MCF 10A (cell line): ENCODE measurements at regions of chr12 and their contacts with region 1.

Region 1: DNA sequence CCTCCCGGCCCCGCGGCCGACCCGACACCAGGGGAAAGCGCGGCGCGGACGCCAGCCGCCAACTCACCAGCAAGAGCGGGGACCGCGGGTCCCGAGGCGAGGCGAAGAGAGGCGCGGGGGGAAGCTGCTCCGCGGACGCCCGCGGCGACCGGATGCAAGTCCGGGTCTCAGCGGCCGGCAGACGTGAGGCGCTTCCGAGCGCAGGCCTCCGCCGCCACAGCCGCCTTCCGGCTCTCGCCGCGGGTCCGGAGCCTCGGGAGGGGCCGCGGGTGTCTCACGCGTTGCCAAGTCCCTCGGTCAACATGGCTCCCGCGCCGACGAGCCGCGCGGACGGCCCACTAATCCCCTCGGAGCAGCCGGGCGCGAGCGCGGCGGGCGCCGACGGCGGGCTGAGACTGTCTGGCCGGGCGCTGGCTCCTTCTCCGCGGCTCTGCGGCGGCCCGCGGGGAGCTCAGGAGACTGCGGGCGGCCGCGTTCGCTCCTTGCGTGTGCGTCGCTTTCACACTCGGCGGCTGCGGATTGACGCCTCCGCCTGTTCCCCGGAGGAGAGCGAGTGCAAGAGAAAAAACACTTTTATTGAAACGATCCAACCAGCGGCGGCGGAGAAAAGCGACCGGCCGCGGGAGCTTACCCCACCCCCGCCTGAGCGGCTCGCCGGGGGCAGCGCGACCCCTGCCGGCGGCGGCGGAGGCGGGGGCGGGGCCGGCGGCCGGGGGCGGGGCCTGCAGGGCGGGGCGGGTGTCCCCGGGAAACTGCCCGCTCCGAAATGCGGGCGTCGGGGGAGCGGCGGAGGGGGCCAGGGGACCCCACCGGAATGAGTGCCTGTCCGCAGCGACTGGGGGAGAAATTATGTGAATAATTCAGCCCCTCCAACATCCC is at the start of gene CDK17:
- DNase-seq: peak; percentile 82
- H3K4me3 Mint-ChIP-seq: peak within 1 kb of the TSS; percentile 98
- H3K27ac Mint-ChIP-seq: peak within 1 kb of the TSS; percentile 98
- H3K4me1 Mint-ChIP-seq: peaks cover 32% of the 10 kb centered on the region
- H3K27me3 Mint-ChIP-seq: no peaks in the 10 kb centered on the region
- CTCF ChIP-seq: peak; percentile 40
- total RNA-seq, gene CDK17: 49.8 and 50.9 TPM in 2 replicates

Region 2: DNA sequence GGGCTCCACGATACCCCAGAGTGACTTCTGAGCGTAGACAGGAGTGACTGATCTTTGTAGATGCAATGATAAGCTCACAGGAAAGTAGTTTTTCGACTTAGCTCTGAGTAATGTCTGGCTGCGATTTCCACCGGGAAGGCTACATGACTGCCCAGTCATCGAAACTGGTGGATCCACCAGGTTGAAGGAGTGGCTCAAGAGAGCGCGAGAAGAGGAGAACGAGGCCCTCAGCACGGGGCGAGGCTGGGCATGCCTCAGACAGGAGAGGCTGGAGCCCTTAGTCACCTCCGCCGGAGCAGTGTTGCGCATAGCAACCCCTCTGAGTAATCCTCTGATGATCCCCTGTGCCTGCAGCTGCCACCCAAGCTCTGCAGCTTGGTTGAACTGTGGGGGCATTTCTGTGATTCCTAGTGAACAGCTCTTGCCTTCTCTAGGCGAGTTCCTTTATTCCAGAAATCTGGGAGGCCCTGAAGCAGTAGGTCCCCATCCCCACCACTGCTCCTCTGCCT is 180.4 kb before region 1 on chr12:
- CTCF ChIA-PET with region 1: interaction called, 25 read pairs
- POLR2A ChIA-PET with region 1: interaction called, 171 read pairs
- intact Hi-C with region 1: loop called (anchors 2 kb)
- DNase-seq: peak; percentile 99
- H3K4me3 Mint-ChIP-seq: peak overlapping the region; percentile 76
- H3K27ac Mint-ChIP-seq: peak overlapping the region; percentile 100
- H3K4me1 Mint-ChIP-seq: peaks cover 51% of the 10 kb centered on the region
- H3K27me3 Mint-ChIP-seq: no peaks in the 10 kb centered on the region
- CTCF ChIP-seq: no peak

Region 3: GRCh38 chr12:96294831-96295230 is 105.3 kb before region 1 on chr12:
- CTCF ChIA-PET with region 1: interaction called, 6 read pairs
- POLR2A ChIA-PET with region 1: interaction called, 5 read pairs
- intact Hi-C with region 1: loop called (anchors 10 kb)
- DNase-seq: peak; percentile 41
- H3K4me3 Mint-ChIP-seq: no peak overlapping the region
- H3K27ac Mint-ChIP-seq: no peak overlapping the region
- H3K4me1 Mint-ChIP-seq: peaks cover 11% of the 10 kb centered on the region
- H3K27me3 Mint-ChIP-seq: no peaks in the 10 kb centered on the region
- CTCF ChIP-seq: no peak

Region 4: DNA sequence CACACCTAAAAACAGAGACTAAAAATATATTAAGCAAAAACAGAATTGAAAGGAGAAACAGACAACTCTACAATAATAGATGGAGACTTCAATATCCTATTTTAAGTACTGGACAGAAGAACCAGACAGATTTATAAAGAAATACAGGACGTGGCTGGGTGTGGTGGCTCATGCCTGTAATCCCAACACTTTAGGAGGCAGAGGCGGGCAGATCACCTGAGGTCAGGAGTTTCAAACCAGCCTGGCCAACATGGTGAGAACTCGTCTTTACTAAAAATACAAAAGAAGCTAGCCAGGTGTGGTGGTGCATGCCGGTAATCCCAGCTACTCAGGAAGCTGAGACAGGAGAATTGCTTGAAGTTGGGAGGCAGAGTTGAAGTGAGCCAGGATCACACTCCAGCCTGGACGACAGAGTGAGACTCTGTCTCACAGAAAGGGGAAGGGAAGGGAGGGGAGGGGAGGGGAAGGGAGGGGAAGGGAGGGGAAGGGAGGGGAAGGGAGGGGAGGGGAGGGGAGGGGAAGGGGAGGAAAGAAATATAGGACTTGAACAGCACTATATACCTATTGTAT is 52.9 kb before region 1 on chr12:
- CTCF ChIA-PET with region 1: interaction called, 6 read pairs
- POLR2A ChIA-PET with region 1: interaction called, 15 read pairs
- intact Hi-C with region 1: no loop called
- DNase-seq: no peak
- H3K4me3 Mint-ChIP-seq: peak overlapping the region; percentile 48
- H3K27ac Mint-ChIP-seq: peak overlapping the region; percentile 57
- H3K4me1 Mint-ChIP-seq: peaks cover 24% of the 10 kb centered on the region
- H3K27me3 Mint-ChIP-seq: no peaks in the 10 kb centered on the region
- CTCF ChIP-seq: no peak

Region 5: DNA sequence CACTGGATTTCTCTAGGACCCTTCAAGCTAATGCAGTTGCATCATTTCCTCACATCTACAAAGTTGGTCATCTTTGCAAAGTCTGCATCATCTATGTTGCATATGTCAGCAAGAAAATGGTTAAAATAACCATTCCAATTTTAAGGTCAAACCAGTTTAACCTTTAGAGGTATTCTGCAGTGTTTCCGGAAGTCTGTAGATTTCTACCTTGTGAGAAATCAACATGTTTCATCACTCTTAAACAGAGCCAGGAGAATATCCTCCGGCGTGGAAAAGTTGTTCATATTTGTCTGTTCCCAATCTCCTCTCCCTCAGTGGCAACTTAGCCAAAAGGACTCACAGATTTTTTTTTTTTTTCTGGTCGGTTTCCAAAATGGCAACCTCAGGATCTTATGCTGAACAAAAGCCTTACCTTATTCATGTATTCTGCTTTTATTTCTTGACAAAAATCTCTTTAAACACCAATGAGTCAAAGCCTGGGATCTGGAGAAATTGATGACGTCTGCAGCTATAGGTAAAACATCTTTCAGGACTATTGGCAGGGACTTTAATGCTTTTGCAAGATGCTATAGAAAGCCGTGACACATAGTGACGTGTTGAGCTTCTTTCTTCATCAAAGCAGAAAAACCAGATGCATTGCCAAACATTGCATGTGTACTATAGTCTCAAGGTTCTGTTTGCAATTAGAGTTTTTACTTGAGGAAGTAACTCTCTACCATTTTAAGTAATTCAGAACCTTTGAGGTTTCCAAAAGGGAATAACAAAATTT is 16.1 kb after region 1 on chr12:
- CTCF ChIA-PET with region 1: interaction called, 12 read pairs
- POLR2A ChIA-PET with region 1: interaction called, 93 read pairs
- intact Hi-C with region 1: loop called (anchors 1 kb)
- DNase-seq: peak; percentile 97
- H3K4me3 Mint-ChIP-seq: peak overlapping the region; percentile 57
- H3K27ac Mint-ChIP-seq: peak overlapping the region; percentile 87
- H3K4me1 Mint-ChIP-seq: peaks cover 14% of the 10 kb centered on the region
- H3K27me3 Mint-ChIP-seq: no peaks in the 10 kb centered on the region
- CTCF ChIP-seq: no peak

Region 6: GRCh38 chr12:96501139-96501761 is 101.1 kb after region 1 on chr12:
- CTCF ChIA-PET with region 1: interaction called, 6 read pairs
- POLR2A ChIA-PET with region 1: interaction called, 26 read pairs
- intact Hi-C with region 1: loop called (anchors 1 kb)
- DNase-seq: peak; percentile 89
- H3K4me3 Mint-ChIP-seq: no peak overlapping the region
- H3K27ac Mint-ChIP-seq: peak overlapping the region; percentile 99
- H3K4me1 Mint-ChIP-seq: peaks cover 30% of the 10 kb centered on the region
- H3K27me3 Mint-ChIP-seq: no peaks in the 10 kb centered on the region
- CTCF ChIP-seq: no peak